B cell (primary cell): ENCODE measurements at regions of chr1 and their contacts with region 1.

Region 1: GRCh38 chr1:109277434-109278204 is 5.3 kb downstream of the PSRC1 start:
- DNase-seq: peak; percentile 75
- ATAC-seq: peak; percentile 92
- H3K4me3 ChIP-seq: no peak overlapping the region
- H3K4me3 Mint-ChIP-seq: no peak overlapping the region
- H3K27ac ChIP-seq: no peak overlapping the region
- H3K27ac Mint-ChIP-seq: no peak overlapping the region
- H3K4me1 ChIP-seq: peaks cover 2 to 11% of the 10 kb centered on the region in 2 donors
- H3K4me1 Mint-ChIP-seq: peaks cover 6% of the 10 kb centered on the region
- H3K27me3 ChIP-seq: peaks cover 0 to 4% (median 0%) of the 10 kb centered on the region in 4 experiments
- H3K27me3 Mint-ChIP-seq: no peaks in the 10 kb centered on the region
- CTCF ChIP-seq: peak; percentile 87

Region 2: DNA sequence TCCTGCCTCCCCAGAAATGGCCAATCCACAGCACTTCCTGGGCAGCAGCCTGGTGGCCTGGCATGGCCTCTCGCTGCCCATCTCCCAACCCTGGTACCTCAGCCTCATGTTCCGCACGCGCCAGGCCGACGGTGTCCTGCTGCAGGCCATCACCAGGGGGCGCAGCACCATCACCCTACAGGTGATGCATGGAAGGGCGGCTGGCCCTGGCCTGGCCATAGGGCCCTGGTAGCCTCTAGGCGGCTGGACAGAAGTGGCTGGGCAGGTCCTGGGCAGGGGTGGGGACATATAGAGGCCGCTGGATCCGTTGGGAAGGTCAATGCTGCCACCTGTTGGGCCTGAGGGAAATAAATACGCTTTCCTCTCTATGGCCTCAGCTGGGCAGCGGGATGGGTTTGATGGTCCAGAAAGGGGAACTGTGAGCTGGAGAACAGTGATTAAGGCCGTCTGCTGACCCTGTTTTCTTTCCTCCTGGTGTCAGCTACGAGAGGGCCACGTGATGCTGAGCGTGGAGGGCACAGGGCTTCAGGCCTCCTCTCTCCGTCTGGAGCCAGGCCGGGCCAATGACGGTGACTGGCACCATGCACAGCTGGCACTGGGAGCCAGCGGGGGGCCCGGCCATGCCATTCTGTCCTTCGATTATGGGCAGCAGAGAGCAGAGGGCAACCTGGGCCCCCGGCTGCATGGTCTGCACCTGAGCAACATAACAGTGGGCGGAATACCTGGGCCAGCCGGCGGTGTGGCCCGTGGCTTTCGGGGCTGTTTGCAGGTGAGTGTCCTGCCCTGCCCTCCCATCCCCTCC is 13.8 kb before region 1 on chr1:
- CTCF ChIA-PET with region 1: interaction called, 14 read pairs
- POLR2A ChIA-PET with region 1: no interaction called
- intact Hi-C with region 1: no loop called
- DNase-seq: peak; percentile 80
- ATAC-seq: peak; percentile 92
- H3K4me3 ChIP-seq: no peak overlapping the region
- H3K4me3 Mint-ChIP-seq: no peak overlapping the region
- H3K27ac ChIP-seq: no peak overlapping the region
- H3K27ac Mint-ChIP-seq: no peak overlapping the region
- H3K4me1 ChIP-seq: peaks cover 0 to 3% of the 10 kb centered on the region in 2 donors
- H3K4me1 Mint-ChIP-seq: peaks cover 4% of the 10 kb centered on the region
- H3K27me3 ChIP-seq: peaks cover 0 to 4% (median 0%) of the 10 kb centered on the region in 4 experiments
- H3K27me3 Mint-ChIP-seq: peaks cover 4% of the 10 kb centered on the region
- CTCF ChIP-seq: peak; percentile 93

Region 3: DNA sequence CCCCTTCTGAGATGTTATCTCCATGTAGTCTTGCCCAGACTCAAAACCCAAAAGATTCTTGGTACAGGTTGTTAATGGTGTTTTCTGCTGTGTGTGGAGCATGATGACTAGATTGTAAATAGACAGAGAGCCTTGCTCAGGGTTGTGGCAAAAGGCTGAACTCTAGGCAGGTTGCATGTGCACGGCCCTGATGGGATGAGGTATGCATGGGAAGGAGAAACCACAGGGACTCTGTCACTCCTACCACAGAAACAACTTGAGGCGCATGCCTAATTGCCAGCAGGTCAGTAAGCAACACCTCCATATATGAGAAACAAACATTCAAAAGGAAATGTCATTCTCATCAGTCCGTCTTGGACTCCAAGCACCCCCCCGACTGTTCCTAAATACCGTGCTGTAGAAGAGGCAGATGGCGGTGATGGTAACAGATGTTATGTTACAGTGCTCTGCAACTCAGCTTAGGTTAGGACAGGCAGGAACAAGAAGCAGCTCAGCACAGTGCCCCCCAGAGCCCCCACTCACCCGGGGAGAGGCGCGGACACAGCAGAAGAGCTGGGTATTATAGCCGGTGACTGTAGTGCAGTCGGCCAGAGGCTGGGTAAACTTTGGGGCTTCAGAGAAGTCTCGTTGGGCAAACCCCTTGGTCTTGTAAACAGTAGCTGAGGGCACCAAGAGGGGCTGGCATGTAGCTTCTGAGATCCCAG is 18.2 kb after region 1 on chr1:
- CTCF ChIA-PET with region 1: interaction called, 13 read pairs
- POLR2A ChIA-PET with region 1: no interaction called
- intact Hi-C with region 1: no loop called
- DNase-seq: no peak
- ATAC-seq: no peak
- H3K4me3 ChIP-seq: no peak overlapping the region
- H3K4me3 Mint-ChIP-seq: no peak overlapping the region
- H3K27ac ChIP-seq: no peak overlapping the region
- H3K27ac Mint-ChIP-seq: no peak overlapping the region
- H3K4me1 ChIP-seq: peaks cover 20 to 30% of the 10 kb centered on the region in 2 donors
- H3K4me1 Mint-ChIP-seq: peaks cover 28% of the 10 kb centered on the region
- H3K27me3 ChIP-seq: peaks cover 0 to 24% (median 3%) of the 10 kb centered on the region in 4 experiments
- H3K27me3 Mint-ChIP-seq: peaks cover 15% of the 10 kb centered on the region
- CTCF ChIP-seq: no peak

Region 4: GRCh38 chr1:109307274-109308021 is 29.8 kb after region 1 on chr1:
- CTCF ChIA-PET with region 1: interaction called, 27 read pairs
- POLR2A ChIA-PET with region 1: no interaction called
- intact Hi-C with region 1: no loop called
- DNase-seq: peak; percentile 62
- ATAC-seq: peak; percentile 96
- H3K4me3 ChIP-seq: peak overlapping the region in 3 of 5 experiments; percentile 15 to 41 (median 27)
- H3K4me3 Mint-ChIP-seq: peak overlapping the region; percentile 62
- H3K27ac ChIP-seq: peak overlapping the region; percentile 36 to 55
- H3K27ac Mint-ChIP-seq: peak overlapping the region; percentile 75
- H3K4me1 ChIP-seq: peaks cover 19 to 20% of the 10 kb centered on the region in 2 donors
- H3K4me1 Mint-ChIP-seq: peaks cover 14% of the 10 kb centered on the region
- H3K27me3 ChIP-seq: peaks cover 0 to 14% (median 6%) of the 10 kb centered on the region in 4 experiments
- H3K27me3 Mint-ChIP-seq: no peaks in the 10 kb centered on the region
- CTCF ChIP-seq: no peak

Region 5: GRCh38 chr1:109391157-109391556 is 113.5 kb after region 1 on chr1:
- CTCF ChIA-PET with region 1: interaction called, 387 read pairs
- POLR2A ChIA-PET with region 1: interaction called, 3 read pairs
- intact Hi-C with region 1: no loop called
- DNase-seq: no peak
- ATAC-seq: no peak
- H3K4me3 ChIP-seq: no peak overlapping the region
- H3K4me3 Mint-ChIP-seq: peak overlapping the region; percentile 51
- H3K27ac ChIP-seq: no peak overlapping the region
- H3K27ac Mint-ChIP-seq: no peak overlapping the region
- H3K4me1 ChIP-seq: peaks cover 22 to 29% of the 10 kb centered on the region in 2 donors
- H3K4me1 Mint-ChIP-seq: peaks cover 30% of the 10 kb centered on the region
- H3K27me3 ChIP-seq: peaks cover 0 to 66% (median 58%) of the 10 kb centered on the region in 4 experiments
- H3K27me3 Mint-ChIP-seq: peaks cover 74% of the 10 kb centered on the region
- CTCF ChIP-seq: no peak

Region 6: GRCh38 chr1:109532365-109533136 is 254.9 kb after region 1 on chr1:
- CTCF ChIA-PET with region 1: interaction called, 76 read pairs
- POLR2A ChIA-PET with region 1: no interaction called
- intact Hi-C with region 1: no loop called
- DNase-seq: peak; percentile 88
- ATAC-seq: peak; percentile 90
- H3K4me3 ChIP-seq: peak overlapping the region in 4 of 5 experiments; percentile 37 to 67 (median 52)
- H3K4me3 Mint-ChIP-seq: peak overlapping the region; percentile 90
- H3K27ac ChIP-seq: peak overlapping the region in 1 of 2 donors; percentile 21
- H3K27ac Mint-ChIP-seq: peak overlapping the region; percentile 87
- H3K4me1 ChIP-seq: peaks cover 4 to 11% of the 10 kb centered on the region in 2 donors
- H3K4me1 Mint-ChIP-seq: peaks cover 11% of the 10 kb centered on the region
- H3K27me3 ChIP-seq: no peaks in the 10 kb centered on the region
- H3K27me3 Mint-ChIP-seq: no peaks in the 10 kb centered on the region
- CTCF ChIP-seq: peak; percentile 93